ENCODE measurements at regions of chr9 and their contacts with region 1.

Region 1: GRCh38 chr9:20941174-20941690 is 90.2 kb downstream of the HACD4 start:
- DNase-seq: peak in 3 of 5 donors; percentile 30 to 37 (median 34)
- ATAC-seq: peak; percentile 82 to 93 (median 88)
- H3K4me3 ChIP-seq: no peak overlapping the region
- H3K27ac ChIP-seq: no peak overlapping the region
- H3K4me1 ChIP-seq: peaks cover 0 to 6% (median 0%) of the 10 kb centered on the region in 12 donors
- H3K27me3 ChIP-seq: no peaks in the 10 kb centered on the region
- CTCF ChIP-seq: peak; percentile 76 to 94 (median 86)
- POLR2A ChIP-seq: no peak

Region 2: GRCh38 chr9:19471737-19472648 is 1469.2 kb before region 1 on chr9:
- intact Hi-C with region 1: loop called in 2 of 10 experiments (anchors 5 to 10 kb)
- DNase-seq: peak; percentile 43 to 75 (median 61)
- ATAC-seq: peak; percentile 32 to 88 (median 78)
- H3K4me3 ChIP-seq: peak overlapping the region in 7 of 12 donors; percentile 10 to 34 (median 17)
- H3K27ac ChIP-seq: peak overlapping the region in 1 of 12 donors; percentile 42
- H3K4me1 ChIP-seq: peaks cover 0 to 15% (median 10%) of the 10 kb centered on the region in 12 donors
- H3K27me3 ChIP-seq: no peaks in the 10 kb centered on the region
- CTCF ChIP-seq: peak; percentile 65 to 85 (median 74)
- POLR2A ChIP-seq: no peak

Region 3: DNA sequence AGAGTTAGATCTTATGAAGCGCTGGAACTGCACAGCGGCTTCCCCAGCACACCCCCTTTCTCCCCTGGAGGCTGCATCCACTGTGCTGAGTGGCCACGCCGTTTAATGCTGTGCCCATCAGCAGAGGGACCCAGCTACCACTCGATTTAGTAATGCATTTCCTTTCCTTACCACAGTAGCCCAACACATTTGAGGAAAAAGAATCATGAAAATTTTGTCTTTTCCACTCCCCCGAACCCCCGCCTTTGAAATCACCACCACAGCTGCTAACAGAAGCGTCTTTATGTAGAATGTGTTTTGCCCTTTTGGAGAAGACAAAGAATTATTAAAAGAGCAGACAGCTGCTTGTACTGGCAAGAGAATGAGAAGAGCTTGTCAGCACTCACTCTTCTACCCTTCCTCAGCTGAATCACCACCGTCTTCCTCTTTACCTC is 1459.2 kb before region 1 on chr9:
- intact Hi-C with region 1: loop called in 2 of 10 experiments (anchors 5 to 10 kb)
- DNase-seq: no peak
- ATAC-seq: peak in 3 of 4 donors; percentile 38 to 52 (median 42)
- H3K4me3 ChIP-seq: no peak overlapping the region
- H3K27ac ChIP-seq: peak overlapping the region in 5 of 12 donors; percentile 30 to 52 (median 45)
- H3K4me1 ChIP-seq: peaks cover 0 to 7% (median 0%) of the 10 kb centered on the region in 12 donors
- H3K27me3 ChIP-seq: peaks cover 0 to 3% (median 0%) of the 10 kb centered on the region in 9 donors
- CTCF ChIP-seq: no peak
- POLR2A ChIP-seq: no peak

Region 4: GRCh38 chr9:20811872-20812271 is 129.4 kb before region 1 on chr9:
- intact Hi-C with region 1: no loop called
- DNase-seq: no peak
- ATAC-seq: no peak
- H3K4me3 ChIP-seq: no peak overlapping the region
- H3K27ac ChIP-seq: no peak overlapping the region
- H3K4me1 ChIP-seq: peaks cover 0 to 18% (median 10%) of the 10 kb centered on the region in 12 donors
- H3K27me3 ChIP-seq: no peaks in the 10 kb centered on the region
- CTCF ChIP-seq: no peak
- POLR2A ChIP-seq: no peak

Region 5: DNA sequence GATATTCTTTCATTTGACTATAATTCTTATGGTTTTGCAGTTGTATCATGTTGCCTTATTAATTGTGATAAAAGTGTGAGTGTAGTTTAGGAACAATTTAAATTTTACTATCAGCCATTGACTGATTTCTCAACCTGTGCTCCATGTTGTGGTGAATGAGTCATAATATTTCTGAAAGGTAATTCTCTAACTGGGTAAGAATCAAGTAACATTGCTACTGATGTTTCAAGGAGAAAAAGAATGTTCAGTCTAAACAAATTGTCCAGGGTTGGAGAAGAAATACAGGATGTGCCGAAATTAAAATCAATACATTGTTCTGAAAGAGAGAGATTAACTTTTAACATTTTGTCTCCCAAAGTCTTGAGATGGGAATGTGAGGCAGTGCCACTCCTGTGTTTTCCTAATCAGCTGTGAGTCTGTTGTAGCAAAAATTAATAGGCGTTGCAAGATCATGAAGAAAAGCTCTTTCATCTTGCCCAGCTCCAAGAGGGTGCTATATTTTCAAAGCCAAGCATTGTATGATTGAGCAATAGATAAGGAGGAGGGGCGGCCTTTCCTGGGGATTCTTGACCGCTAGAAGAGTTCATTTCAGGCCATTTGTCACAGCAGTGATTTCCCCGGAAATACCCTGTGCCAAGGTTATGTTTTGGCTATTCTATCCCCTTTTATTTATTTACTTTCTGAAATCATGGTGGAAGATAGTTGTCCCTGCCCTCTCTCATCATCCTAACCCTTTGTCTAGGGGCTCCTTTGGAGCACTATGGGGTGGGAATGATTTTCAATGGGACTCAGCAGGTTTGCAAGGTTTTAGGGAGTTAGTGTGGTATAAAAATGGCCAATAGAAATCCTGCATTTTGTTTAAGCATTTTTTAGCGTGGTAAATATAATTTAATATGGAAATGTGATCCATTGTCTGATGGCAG is 105.6 kb before region 1 on chr9:
- intact Hi-C with region 1: no loop called
- DNase-seq: no peak
- ATAC-seq: peak in 1 of 4 donors; percentile 32
- H3K4me3 ChIP-seq: no peak overlapping the region
- H3K27ac ChIP-seq: no peak overlapping the region
- H3K4me1 ChIP-seq: peaks cover 0 to 7% (median 0%) of the 10 kb centered on the region in 12 donors
- H3K27me3 ChIP-seq: no peaks in the 10 kb centered on the region
- CTCF ChIP-seq: no peak
- POLR2A ChIP-seq: no peak

Region 6: GRCh38 chr9:20872340-20872977 is 68.8 kb before region 1 on chr9:
- intact Hi-C with region 1: loop called in 1 of 10 experiments (anchors 10 kb)
- DNase-seq: no peak
- ATAC-seq: no peak
- H3K4me3 ChIP-seq: no peak overlapping the region
- H3K27ac ChIP-seq: no peak overlapping the region
- H3K4me1 ChIP-seq: peaks cover 0 to 12% (median 0%) of the 10 kb centered on the region in 12 donors
- H3K27me3 ChIP-seq: no peaks in the 10 kb centered on the region
- CTCF ChIP-seq: no peak
- POLR2A ChIP-seq: no peak

Region 7: GRCh38 chr9:20884985-20885593 is 56.1 kb before region 1 on chr9:
- intact Hi-C with region 1: loop called in 1 of 10 experiments (anchors 10 kb)
- DNase-seq: peak; percentile 26 to 49 (median 44)
- ATAC-seq: no peak
- H3K4me3 ChIP-seq: no peak overlapping the region
- H3K27ac ChIP-seq: no peak overlapping the region
- H3K4me1 ChIP-seq: no peaks in the 10 kb centered on the region
- H3K27me3 ChIP-seq: no peaks in the 10 kb centered on the region
- CTCF ChIP-seq: peak; percentile 52 to 74 (median 66)
- POLR2A ChIP-seq: no peak

Region 8: GRCh38 chr9:21001581-21001980 is 60.3 kb after region 1 on chr9:
- intact Hi-C with region 1: no loop called
- DNase-seq: no peak
- ATAC-seq: no peak
- H3K4me3 ChIP-seq: no peak overlapping the region
- H3K27ac ChIP-seq: no peak overlapping the region
- H3K4me1 ChIP-seq: no peaks in the 10 kb centered on the region
- H3K27me3 ChIP-seq: no peaks in the 10 kb centered on the region
- CTCF ChIP-seq: no peak
- POLR2A ChIP-seq: no peak